B cell (primary cell): ENCODE measurements at regions of chr9 and their contacts with region 1.

Region 1: DNA sequence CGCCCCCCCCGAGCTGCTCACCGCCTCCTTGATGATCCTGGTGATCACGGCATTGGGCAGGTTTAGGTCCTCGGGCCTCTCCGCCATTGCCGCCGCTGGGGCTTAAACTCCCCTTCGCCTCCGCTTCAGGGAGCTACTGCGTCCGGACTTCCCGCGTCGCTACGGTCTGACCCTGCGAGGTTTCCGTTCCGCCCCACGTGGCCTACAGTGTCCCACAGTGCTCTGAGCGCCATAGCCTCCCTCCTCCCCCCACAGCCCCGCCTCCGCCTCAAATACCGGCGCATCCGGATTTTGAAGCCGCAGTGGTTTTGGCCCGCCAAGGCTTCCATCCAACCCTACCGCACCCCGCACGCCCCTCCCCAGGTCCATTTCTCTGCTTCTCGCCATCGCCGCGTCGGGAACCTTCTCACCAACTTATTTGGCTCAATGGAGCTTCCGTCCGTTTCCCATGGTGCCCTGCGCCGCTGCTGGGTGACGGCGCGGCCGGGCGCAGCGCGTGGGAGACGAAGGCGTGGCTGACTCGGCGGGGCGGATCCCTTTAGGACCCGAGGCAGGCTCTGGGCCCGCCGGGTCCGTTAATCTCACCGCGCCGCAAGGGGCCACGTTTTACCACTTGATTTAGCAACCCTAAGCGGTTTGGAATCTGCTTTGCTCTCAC is at the starts of genes C9orf43 and POLE3:
- DNase-seq: peak; percentile 98
- ATAC-seq: peak; percentile 89
- H3K4me3 ChIP-seq: peak within 1 kb of the TSS; percentile 74 to 100 (median 97)
- H3K4me3 Mint-ChIP-seq: peak within 1 kb of the TSS; percentile 100
- H3K27ac ChIP-seq: peak within 1 kb of the TSS; percentile 92 to 97
- H3K27ac Mint-ChIP-seq: peak within 1 kb of the TSS; percentile 100
- H3K4me1 ChIP-seq: peaks cover 8 to 17% of the 10 kb centered on the region in 2 donors
- H3K4me1 Mint-ChIP-seq: peaks cover 32% of the 10 kb centered on the region
- H3K27me3 ChIP-seq: no peaks in the 10 kb centered on the region
- H3K27me3 Mint-ChIP-seq: no peaks in the 10 kb centered on the region
- CTCF ChIP-seq: peak; percentile 14
- total RNA-seq, gene C9orf43: 0.58 and 1.7 TPM in 2 replicates
- total RNA-seq, gene POLE3: 46.1 and 50.3 TPM in 2 replicates

Region 2: DNA sequence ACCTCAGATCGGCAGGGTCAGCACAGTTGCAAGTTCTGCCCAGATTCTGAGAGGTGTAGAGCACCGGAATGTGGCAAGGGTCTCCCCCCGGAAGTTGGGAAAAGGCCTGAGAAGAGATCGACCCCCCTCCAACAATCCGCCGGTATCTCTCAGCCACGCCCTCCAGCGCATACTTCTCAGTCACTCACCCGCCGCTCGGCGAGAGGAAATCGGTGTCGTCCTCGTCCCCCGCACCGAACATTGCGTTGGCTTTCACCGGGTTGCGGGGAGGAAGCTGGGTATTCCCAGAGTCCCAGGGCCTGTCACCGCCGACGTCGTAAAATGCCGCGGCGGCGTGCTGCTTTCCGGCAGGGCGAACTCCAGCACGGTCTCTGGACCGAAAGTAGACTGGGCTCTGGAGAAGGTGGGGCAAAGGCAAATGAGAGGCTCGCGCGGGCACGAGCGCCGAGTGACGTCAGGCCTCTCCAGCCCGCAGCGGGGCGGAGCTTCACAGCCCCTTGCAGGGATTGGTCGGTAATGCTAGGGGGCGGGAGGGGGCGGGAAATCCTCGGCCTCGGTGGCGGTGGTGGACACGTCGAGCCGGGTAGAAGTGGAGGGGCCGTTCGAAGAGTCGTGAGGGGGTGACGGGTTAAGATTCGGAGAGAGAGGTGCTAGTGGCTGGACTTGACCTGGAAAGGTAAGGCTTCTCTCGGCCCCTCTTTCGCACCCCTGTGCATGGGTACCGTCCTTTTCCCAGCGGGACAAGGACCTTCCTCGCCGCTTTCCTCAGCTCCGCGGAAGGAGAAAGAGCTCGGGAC is 189.1 kb before region 1 on chr9 and contains the starts of genes FKBP15 and SLC31A1:
- CTCF ChIA-PET with region 1: no interaction called
- POLR2A ChIA-PET with region 1: interaction called, 12 read pairs
- intact Hi-C with region 1: no loop called
- DNase-seq: peak; percentile 98
- ATAC-seq: peak; percentile 98
- H3K4me3 ChIP-seq: peak within 1 kb of the TSS; percentile 77 to 97 (median 94)
- H3K4me3 Mint-ChIP-seq: peak within 1 kb of the TSS; percentile 95
- H3K27ac ChIP-seq: peak within 1 kb of the TSS; percentile 59 to 84
- H3K27ac Mint-ChIP-seq: peak within 1 kb of the TSS; percentile 95
- H3K4me1 ChIP-seq: peaks cover 33 to 35% of the 10 kb centered on the region in 2 donors
- H3K4me1 Mint-ChIP-seq: peaks cover 48% of the 10 kb centered on the region
- H3K27me3 ChIP-seq: no peaks in the 10 kb centered on the region
- H3K27me3 Mint-ChIP-seq: no peaks in the 10 kb centered on the region
- CTCF ChIP-seq: no peak
- total RNA-seq, gene FKBP15: 40.6 and 41.2 TPM in 2 replicates
- total RNA-seq, gene SLC31A1: 3.2 and 3.5 TPM in 2 replicates

Region 3: DNA sequence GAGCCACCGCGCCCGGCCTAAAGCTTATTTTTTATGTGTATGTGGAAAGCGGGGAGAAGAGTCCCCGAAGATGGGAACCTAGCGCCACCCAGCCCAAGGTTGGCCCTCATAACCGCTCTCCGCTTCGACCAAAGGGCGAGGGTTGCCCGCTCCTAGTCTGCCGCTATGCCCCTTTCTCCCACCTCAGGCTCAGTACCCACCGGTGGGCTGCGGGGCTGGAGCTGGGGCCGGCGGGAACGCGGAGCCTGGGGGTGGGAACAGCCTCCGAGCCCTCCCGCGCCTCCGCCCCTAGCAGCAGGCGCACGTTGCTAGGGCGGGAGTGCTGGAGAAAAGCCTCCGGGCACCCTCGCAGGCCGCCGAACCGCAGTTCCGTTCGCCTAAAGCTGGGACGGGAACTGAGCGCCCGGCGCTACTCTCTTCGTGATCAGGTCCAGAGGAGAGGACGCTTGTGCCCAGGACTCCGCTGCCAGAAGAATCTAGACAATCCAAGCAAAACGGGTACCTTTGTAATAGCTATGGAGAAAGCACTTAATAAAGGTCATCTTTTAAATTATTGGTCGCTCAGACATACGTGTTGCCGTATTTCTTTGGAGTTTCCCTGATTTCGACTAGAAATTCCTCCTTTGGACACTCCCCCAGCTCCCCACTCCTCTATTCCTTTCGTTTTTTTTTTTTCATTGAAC is 70.2 kb before region 1 on chr9 and contains the start of gene WDR31:
- CTCF ChIA-PET with region 1: interaction called, 4 read pairs
- POLR2A ChIA-PET with region 1: interaction called, 5 read pairs
- intact Hi-C with region 1: loop called (anchors 2 kb)
- DNase-seq: peak; percentile 84
- ATAC-seq: peak; percentile 97
- H3K4me3 ChIP-seq: peak within 1 kb of the TSS; percentile 42 to 85 (median 73)
- H3K4me3 Mint-ChIP-seq: peak within 1 kb of the TSS; percentile 90
- H3K27ac ChIP-seq: peak within 1 kb of the TSS in 1 of 2 donors; percentile 41
- H3K27ac Mint-ChIP-seq: peak within 1 kb of the TSS; percentile 84
- H3K4me1 ChIP-seq: peaks cover 8 to 12% of the 10 kb centered on the region in 2 donors
- H3K4me1 Mint-ChIP-seq: peaks cover 16% of the 10 kb centered on the region
- H3K27me3 ChIP-seq: no peaks in the 10 kb centered on the region
- H3K27me3 Mint-ChIP-seq: peaks cover 8% of the 10 kb centered on the region
- CTCF ChIP-seq: no peak
- total RNA-seq, gene WDR31: 0.62 and 1.0 TPM in 2 replicates

Region 4: GRCh38 chr9:113446323-113446740 is 36.0 kb after region 1 on chr9:
- CTCF ChIA-PET with region 1: interaction called, 14 read pairs
- POLR2A ChIA-PET with region 1: no interaction called
- intact Hi-C with region 1: loop called (anchors 5 kb)
- DNase-seq: peak; percentile 58
- ATAC-seq: no peak
- H3K4me3 ChIP-seq: no peak overlapping the region
- H3K4me3 Mint-ChIP-seq: no peak overlapping the region
- H3K27ac ChIP-seq: no peak overlapping the region
- H3K27ac Mint-ChIP-seq: no peak overlapping the region
- H3K4me1 ChIP-seq: no peaks in the 10 kb centered on the region
- H3K4me1 Mint-ChIP-seq: no peaks in the 10 kb centered on the region
- H3K27me3 ChIP-seq: no peaks in the 10 kb centered on the region
- H3K27me3 Mint-ChIP-seq: no peaks in the 10 kb centered on the region
- CTCF ChIP-seq: peak; percentile 80